Activated CD8-positive, alpha-beta memory T cell treated with anti-CD3 and anti-CD28 coated beads, Interleukin-2, amount 10 ng/mL, durations not matched to agents 7 days and 5 days (primary cell): ENCODE measurements at regions of chr10 and their contacts with region 1.

Region 1: GRCh38 chr10:14971867-14972448 is 12.8 kb downstream of the MEIG1 start:
- DNase-seq: peak; percentile 63
- ATAC-seq: peak; percentile 60
- H3K4me3 Mint-ChIP-seq: no peak overlapping the region
- H3K27ac Mint-ChIP-seq: no peak overlapping the region
- H3K4me1 Mint-ChIP-seq: peaks cover under 1% of the 10 kb centered on the region
- H3K27me3 Mint-ChIP-seq: peaks cover 2% of the 10 kb centered on the region

Region 2: GRCh38 chr10:14954001-14954770 is 17.8 kb before region 1 on chr10 and contains the start of gene DCLRE1C:
- CTCF ChIA-PET with region 1: interaction called, 14 read pairs
- DNase-seq: peak; percentile 96
- ATAC-seq: peak; percentile 92
- H3K4me3 Mint-ChIP-seq: peak within 1 kb of the TSS; percentile 81
- H3K27ac Mint-ChIP-seq: peak within 1 kb of the TSS; percentile 98
- H3K4me1 Mint-ChIP-seq: peaks cover 60% of the 10 kb centered on the region
- H3K27me3 Mint-ChIP-seq: no peaks in the 10 kb centered on the region
- total RNA-seq, gene DCLRE1C: 29.2 to 47.4 TPM

Region 3: DNA sequence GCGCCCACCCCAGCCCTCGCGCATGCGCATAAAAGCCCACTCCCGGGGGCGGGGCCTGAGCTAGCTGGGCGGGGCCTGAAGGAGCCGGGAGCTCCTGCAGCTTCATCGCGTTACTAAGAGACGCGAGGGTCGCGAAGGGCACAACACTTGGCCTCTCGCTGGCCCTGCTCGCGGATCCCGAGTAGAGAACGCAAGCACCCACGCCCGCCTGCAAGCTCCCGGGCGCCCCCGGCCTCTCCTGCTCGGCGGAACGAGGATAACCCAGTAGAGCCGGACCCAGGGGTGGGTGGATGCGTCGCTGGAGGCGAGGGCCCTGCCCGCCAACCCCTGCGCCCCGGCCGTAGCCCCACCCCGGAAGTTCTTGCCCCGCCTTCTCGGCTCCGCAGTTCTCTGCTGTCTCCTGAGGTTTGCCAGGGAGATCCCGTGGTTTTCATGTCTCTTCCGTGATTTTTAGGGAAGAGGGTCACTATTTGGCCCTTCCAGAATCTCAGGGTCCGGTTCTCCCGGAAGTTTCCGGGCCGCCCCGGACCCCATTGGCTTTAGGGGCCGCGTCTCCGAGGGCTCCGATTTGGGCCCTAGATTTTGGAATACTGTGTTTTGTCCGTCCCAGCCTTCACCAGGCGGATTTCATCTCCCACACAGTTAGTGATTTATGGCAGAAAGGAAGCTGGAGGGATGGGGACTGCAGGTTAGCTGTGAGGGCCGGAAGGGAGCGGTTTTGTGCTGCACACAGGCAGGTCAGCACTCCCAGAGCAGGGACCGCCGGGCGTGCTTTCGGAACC is 12.5 kb before region 1 on chr10 and contains the start of gene MEIG1:
- CTCF ChIA-PET with region 1: interaction called, 14 read pairs
- DNase-seq: peak; percentile 96
- ATAC-seq: peak; percentile 95
- H3K4me3 Mint-ChIP-seq: peak within 1 kb of the TSS; percentile 96
- H3K27ac Mint-ChIP-seq: peak within 1 kb of the TSS; percentile 99
- H3K4me1 Mint-ChIP-seq: peaks cover 40% of the 10 kb centered on the region
- H3K27me3 Mint-ChIP-seq: no peaks in the 10 kb centered on the region
- total RNA-seq, gene MEIG1: 0.91 to 1.1 TPM

Region 4: GRCh38 chr10:14995964-14996565 is 24.1 kb after region 1 on chr10:
- CTCF ChIA-PET with region 1: no interaction called
- DNase-seq: no peak
- ATAC-seq: no peak
- H3K4me3 Mint-ChIP-seq: no peak overlapping the region
- H3K27ac Mint-ChIP-seq: no peak overlapping the region
- H3K4me1 Mint-ChIP-seq: peaks cover 7% of the 10 kb centered on the region
- H3K27me3 Mint-ChIP-seq: peaks cover 5% of the 10 kb centered on the region